H1 (cell line): ENCODE measurements at regions of chr12 and their contacts with region 1.

Region 1: DNA sequence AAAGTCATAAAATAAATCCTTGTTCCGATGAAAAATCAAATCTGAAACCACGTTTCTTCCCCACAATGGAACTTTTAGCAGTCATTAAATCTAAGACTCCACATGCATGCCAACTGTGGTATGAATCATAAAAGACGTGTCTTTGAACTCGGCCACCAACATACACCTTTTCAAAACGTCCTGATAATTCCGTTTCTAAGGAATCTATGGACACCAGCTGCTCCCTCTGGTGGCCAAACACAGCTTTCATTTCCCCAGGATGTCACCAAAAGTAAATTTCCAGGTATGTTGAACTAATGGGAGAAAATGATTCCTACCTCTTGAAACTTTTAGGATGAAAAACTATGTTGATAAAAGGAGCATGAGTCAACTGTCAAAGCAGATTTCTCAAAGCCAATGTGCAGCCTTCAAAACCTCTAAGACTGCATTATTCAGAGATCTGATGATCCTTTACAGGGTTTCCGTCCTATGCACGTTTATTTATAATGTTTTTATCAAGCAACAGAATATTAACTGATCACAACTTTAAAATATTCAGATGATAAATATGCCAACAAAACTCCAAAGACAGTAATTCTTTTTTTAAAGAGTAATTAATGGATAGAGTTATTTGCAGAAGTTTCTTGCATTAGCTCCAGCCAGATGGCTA is 96.2 kb downstream of the CIT start:
- DNase-seq: peak in 1 of 2 experiments; percentile 50
- H3K4me3 ChIP-seq: no peak overlapping the region
- H3K27ac ChIP-seq: no peak overlapping the region
- H3K4me1 ChIP-seq: no peaks in the 10 kb centered on the region
- H3K27me3 ChIP-seq: no peaks in the 10 kb centered on the region
- CTCF ChIP-seq: peak; percentile 9 to 82 (median 61)
- EP300 ChIP-seq: no peak
- POLR2A ChIP-seq: no peak
- RAD21 ChIP-seq: peak; percentile 21 to 43; a peak in 3 of 4 replicates

Region 2: GRCh38 chr12:119491814-119492213 is 289.1 kb before region 1 on chr12:
- CTCF ChIA-PET with region 1: no interaction called
- POLR2A ChIA-PET with region 1: no interaction called
- DNase-seq: no peak
- H3K4me3 ChIP-seq: no peak overlapping the region
- H3K27ac ChIP-seq: no peak overlapping the region
- H3K4me1 ChIP-seq: peaks cover 0 to 3% (median 1%) of the 10 kb centered on the region in 4 experiments; a peak in 1 of 7 replicates
- H3K27me3 ChIP-seq: no peaks in the 10 kb centered on the region; a peak in 1 of 7 replicates
- CTCF ChIP-seq: no peak
- EP300 ChIP-seq: no peak
- POLR2A ChIP-seq: no peak
- RAD21 ChIP-seq: no peak

Region 3: DNA sequence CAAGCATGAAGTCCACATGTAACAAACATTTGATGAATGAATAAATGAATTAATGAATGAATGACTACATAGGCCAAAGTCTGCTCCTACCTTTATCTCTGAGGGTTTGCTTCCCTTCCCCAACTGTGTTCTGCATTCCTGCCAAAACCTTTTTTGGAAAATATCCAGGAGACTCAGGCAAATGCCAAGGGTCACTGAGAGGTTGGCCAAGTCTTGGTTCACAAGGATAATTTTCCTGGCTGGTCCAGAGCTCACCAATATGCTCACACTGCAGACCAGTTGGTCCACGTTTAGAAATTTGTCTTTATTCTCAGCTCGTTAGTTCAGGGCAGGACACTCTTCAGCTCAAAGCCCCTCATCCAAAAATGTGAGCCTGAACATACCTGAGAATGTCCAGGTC is 177.1 kb before region 1 on chr12:
- CTCF ChIA-PET with region 1: no interaction called
- POLR2A ChIA-PET with region 1: no interaction called
- DNase-seq: no peak
- H3K4me3 ChIP-seq: no peak overlapping the region
- H3K27ac ChIP-seq: no peak overlapping the region
- H3K4me1 ChIP-seq: no peaks in the 10 kb centered on the region
- H3K27me3 ChIP-seq: 0 out of 7 replicates have a peak, but pooled peaks cover 0 to 2% (median 0%) of the 10 kb centered on the region in 4 experiments
- CTCF ChIP-seq: no peak
- EP300 ChIP-seq: no peak
- POLR2A ChIP-seq: no peak
- RAD21 ChIP-seq: no peak

Region 4: DNA sequence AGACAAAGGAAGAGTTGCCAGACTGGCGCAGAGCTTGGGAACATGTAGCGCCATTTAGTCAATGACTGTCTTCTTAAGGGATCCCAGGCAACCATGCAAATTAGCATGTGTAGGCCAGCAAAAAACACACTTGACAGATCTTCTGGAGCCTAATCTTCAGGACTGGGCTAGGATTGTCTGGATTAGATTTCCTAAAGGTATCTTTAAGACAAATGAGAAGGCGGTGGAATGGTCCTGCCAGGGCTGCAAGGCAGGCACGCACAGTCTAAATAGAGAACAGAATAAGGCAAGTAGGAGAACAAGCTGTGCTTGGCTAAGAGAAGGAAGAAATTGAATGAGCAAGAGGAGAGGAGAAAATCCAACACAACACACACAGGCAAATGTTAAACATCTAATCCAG is 16.2 kb after region 1 on chr12:
- CTCF ChIA-PET with region 1: interaction called, 23 read pairs
- POLR2A ChIA-PET with region 1: no interaction called
- DNase-seq: no peak
- H3K4me3 ChIP-seq: no peak overlapping the region
- H3K27ac ChIP-seq: no peak overlapping the region
- H3K4me1 ChIP-seq: no peaks in the 10 kb centered on the region
- H3K27me3 ChIP-seq: no peaks in the 10 kb centered on the region
- CTCF ChIP-seq: no peak
- EP300 ChIP-seq: no peak
- POLR2A ChIP-seq: no peak
- RAD21 ChIP-seq: no peak

Region 5: GRCh38 chr12:119802472-119802871 is 21.6 kb after region 1 on chr12:
- CTCF ChIA-PET with region 1: interaction called, 23 read pairs
- POLR2A ChIA-PET with region 1: no interaction called
- DNase-seq: no peak
- H3K4me3 ChIP-seq: no peak overlapping the region
- H3K27ac ChIP-seq: no peak overlapping the region
- H3K4me1 ChIP-seq: peaks cover 3 to 4% (median 4%) of the 10 kb centered on the region in 4 experiments; a peak in 6 of 7 replicates
- H3K27me3 ChIP-seq: no peaks in the 10 kb centered on the region
- CTCF ChIP-seq: no peak
- EP300 ChIP-seq: no peak
- POLR2A ChIP-seq: no peak
- RAD21 ChIP-seq: no peak

Region 6: GRCh38 chr12:119828300-119828699 is 47.4 kb after region 1 on chr12:
- CTCF ChIA-PET with region 1: no interaction called
- POLR2A ChIA-PET with region 1: no interaction called
- DNase-seq: no peak
- H3K4me3 ChIP-seq: no peak overlapping the region
- H3K27ac ChIP-seq: no peak overlapping the region
- H3K4me1 ChIP-seq: no peaks in the 10 kb centered on the region
- H3K27me3 ChIP-seq: no peaks in the 10 kb centered on the region
- CTCF ChIP-seq: no peak
- EP300 ChIP-seq: no peak
- POLR2A ChIP-seq: no peak
- RAD21 ChIP-seq: no peak

Region 7: GRCh38 chr12:119911182-119911581 is 130.3 kb after region 1 on chr12:
- CTCF ChIA-PET with region 1: no interaction called
- POLR2A ChIA-PET with region 1: no interaction called
- DNase-seq: no peak
- H3K4me3 ChIP-seq: no peak overlapping the region
- H3K27ac ChIP-seq: no peak overlapping the region
- H3K4me1 ChIP-seq: no peaks in the 10 kb centered on the region
- H3K27me3 ChIP-seq: no peaks in the 10 kb centered on the region
- CTCF ChIP-seq: no peak
- EP300 ChIP-seq: no peak
- POLR2A ChIP-seq: no peak
- RAD21 ChIP-seq: no peak